ENCODE measurements at regions of chr13 and their contacts with region 1.

Region 1: DNA sequence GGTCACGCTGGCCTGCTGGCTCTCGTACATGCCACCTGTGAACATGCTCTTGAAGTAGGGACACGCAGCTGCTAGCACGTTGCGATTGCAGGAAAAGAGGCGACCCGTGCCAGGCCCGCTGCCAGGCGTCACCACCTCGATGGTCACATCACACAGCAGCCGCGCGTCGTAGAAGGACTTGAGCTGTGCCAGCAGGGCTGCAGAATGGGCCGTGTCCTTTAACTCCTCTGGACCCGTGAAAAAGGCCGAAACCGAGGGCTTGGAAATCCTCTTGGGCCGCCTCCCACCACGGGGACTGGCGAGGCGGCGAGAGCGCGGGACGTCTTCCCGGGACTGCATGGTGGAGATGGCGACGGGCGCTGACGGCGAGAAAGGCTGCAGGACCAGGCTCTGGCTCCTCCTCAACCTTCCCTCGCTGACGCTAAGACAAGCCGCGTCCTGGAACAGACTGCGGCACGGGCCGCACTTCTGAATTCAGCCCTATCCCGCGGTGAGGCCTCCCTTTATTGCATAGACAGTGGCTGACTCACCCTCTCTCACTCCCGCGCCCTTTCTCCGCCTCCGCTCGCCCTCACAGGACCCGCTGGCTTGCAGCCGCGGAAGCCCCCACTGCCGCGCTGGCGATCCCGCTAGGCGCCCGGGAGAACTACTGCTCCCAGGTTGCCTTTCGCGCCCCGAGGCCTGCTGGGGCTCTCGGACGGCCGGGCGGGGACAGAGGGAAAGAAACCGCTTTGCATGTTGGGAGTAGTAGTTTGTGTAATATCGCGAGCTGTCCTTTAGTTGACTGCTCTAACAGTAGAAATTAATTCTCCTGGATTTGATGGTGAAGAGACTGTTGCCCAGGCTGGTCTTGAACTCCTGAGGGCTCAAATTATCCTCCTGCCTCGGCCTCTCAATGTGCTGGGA is at the start of gene KBTBD7:
- DNase-seq: peak; percentile 97
- H3K4me3 ChIP-seq: peak within 1 kb of the TSS; percentile 53 to 80 (median 68)
- H3K27ac ChIP-seq: peak within 1 kb of the TSS; percentile 82 to 92 (median 86)
- H3K4me1 ChIP-seq: peaks cover 0 to 34% (median 24%) of the 10 kb centered on the region in 4 donors
- H3K27me3 ChIP-seq: no peaks in the 10 kb centered on the region
- CTCF ChIP-seq: no peak
- EP300 ChIP-seq: peak in 1 of 4 donors; percentile 32
- POLR2A ChIP-seq: peak; percentile 32 to 38
- total RNA-seq, gene KBTBD7: 5.6 to 10.2 (median 8.0) TPM

Region 2: GRCh38 chr13:40922437-40923040 is 271.6 kb before region 1 on chr13:
- intact Hi-C with region 1: loop called (anchors 10 kb)
- DNase-seq: no peak
- H3K4me3 ChIP-seq: no peak overlapping the region
- H3K27ac ChIP-seq: no peak overlapping the region
- H3K4me1 ChIP-seq: peaks cover 0 to 13% (median 8%) of the 10 kb centered on the region in 4 donors
- H3K27me3 ChIP-seq: no peaks in the 10 kb centered on the region
- CTCF ChIP-seq: no peak
- EP300 ChIP-seq: no peak
- POLR2A ChIP-seq: no peak

Region 3: DNA sequence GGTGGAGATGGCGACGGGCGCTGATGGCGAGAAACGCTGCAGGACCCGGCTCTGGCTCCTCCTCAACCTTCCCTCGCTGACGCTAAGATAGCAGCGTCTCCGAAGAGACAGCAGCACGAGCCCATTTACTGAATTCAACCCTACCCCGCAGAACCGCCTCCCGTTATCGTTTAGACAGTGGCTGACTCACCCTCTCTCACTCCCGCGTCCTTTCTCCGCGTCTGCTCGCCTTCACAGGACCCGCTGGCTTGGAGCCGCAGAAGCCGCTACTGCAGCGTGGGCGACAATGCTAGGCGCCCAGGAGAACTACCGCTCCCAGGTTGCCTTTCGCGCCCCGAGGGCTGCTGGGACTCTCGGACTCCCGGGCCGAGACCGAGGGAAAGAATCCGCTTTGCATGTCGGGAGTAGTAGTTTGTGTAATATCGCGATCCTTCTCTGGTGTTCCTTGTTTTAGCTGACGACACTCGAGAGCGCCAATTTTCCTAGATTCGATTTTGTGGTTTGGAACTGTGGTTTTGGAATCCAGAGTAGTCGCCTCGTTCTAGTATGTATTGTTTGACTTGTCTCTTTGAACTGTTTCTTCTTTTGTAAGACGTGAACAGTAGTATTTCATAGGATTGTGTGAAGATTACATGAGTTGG is 61.5 kb before region 1 on chr13 and contains the start of gene KBTBD6:
- intact Hi-C with region 1: loop called (anchors 1 kb)
- DNase-seq: peak; percentile 97
- H3K4me3 ChIP-seq: peak within 1 kb of the TSS; percentile 66 to 85 (median 78)
- H3K27ac ChIP-seq: peak within 1 kb of the TSS; percentile 90 to 93 (median 91)
- H3K4me1 ChIP-seq: peaks cover 0 to 43% (median 32%) of the 10 kb centered on the region in 4 donors
- H3K27me3 ChIP-seq: no peaks in the 10 kb centered on the region
- CTCF ChIP-seq: no peak
- EP300 ChIP-seq: peak in 1 of 4 donors; percentile 54
- POLR2A ChIP-seq: peak; percentile 38 to 59
- total RNA-seq, gene KBTBD6: 6.7 to 10.7 (median 9.9) TPM

Region 4: GRCh38 chr13:41263261-41264027 is 69.3 kb after region 1 on chr13 and contains the start of gene MTRF1:
- intact Hi-C with region 1: loop called (anchors 5 kb)
- DNase-seq: peak; percentile 85
- H3K4me3 ChIP-seq: peak within 1 kb of the TSS; percentile 44 to 65 (median 64)
- H3K27ac ChIP-seq: peak within 1 kb of the TSS; percentile 62 to 85 (median 84)
- H3K4me1 ChIP-seq: peaks cover 0 to 8% (median 5%) of the 10 kb centered on the region in 4 donors
- H3K27me3 ChIP-seq: no peaks in the 10 kb centered on the region
- CTCF ChIP-seq: no peak
- EP300 ChIP-seq: no peak
- POLR2A ChIP-seq: no peak
- total RNA-seq, gene MTRF1: 12.5 to 19.9 (median 15.0) TPM

Region 5: GRCh38 chr13:41345914-41346589 is 151.9 kb after region 1 on chr13:
- intact Hi-C with region 1: no loop called
- DNase-seq: no peak
- H3K4me3 ChIP-seq: no peak overlapping the region
- H3K27ac ChIP-seq: no peak overlapping the region
- H3K4me1 ChIP-seq: no peaks in the 10 kb centered on the region
- H3K27me3 ChIP-seq: no peaks in the 10 kb centered on the region
- CTCF ChIP-seq: no peak
- EP300 ChIP-seq: no peak
- POLR2A ChIP-seq: no peak